Right ventricle myocardium inferior (tissue), 1 donor: ENCODE measurements at regions of chr2 and their contacts with region 1.

Region 1: DNA sequence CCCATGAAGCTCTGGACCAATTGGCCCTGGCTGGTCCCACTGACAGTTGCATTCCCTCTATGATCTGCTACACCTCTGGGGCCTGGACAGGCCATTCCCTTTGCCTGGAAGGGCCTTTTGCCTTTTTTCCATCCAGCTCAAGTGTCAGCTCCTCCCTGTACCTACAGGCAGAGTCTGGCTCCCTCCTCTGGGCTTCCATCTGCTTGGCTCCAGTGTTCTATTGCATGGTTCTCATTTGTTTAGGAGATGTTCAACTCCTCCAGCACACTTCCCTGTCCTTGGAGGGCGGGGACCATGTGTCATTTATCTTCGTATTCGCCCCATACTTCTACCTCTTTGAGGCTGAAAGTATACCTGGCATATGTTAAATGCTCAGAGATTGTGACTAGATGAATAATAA is 61.1 kb downstream of the PRKCE start:
- DNase-seq: no peak
- ATAC-seq: no peak

Region 2: DNA sequence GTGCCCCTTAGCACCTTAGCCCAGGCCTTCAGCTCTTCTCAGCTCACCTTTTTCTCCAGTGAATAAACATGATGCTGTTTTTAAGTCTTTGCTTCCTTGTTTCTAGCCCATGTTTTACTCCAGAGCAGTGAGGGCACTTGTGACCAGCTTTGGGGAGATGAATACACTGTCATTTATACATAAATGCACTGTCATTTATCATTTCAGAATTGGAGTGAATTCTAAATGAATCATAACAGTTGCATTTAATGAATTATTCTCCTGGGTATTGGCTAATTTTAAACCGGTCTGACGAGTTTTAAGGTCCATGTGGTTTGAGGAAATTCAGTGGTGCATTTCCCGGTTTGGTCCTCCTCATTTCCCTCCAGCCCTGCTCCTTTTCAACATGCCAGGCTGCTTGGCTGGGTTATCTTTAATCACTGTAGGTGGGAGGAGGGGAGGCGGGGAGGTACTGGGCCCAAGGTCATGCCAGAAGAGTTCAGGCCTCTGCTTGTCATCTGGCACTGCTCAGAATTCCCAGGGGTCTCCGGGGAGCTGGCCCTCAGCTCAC is 37.2 kb before region 1 on chr2:
- intact Hi-C with region 1: no loop called
- DNase-seq: no peak
- ATAC-seq: peak; percentile 74

Region 3: DNA sequence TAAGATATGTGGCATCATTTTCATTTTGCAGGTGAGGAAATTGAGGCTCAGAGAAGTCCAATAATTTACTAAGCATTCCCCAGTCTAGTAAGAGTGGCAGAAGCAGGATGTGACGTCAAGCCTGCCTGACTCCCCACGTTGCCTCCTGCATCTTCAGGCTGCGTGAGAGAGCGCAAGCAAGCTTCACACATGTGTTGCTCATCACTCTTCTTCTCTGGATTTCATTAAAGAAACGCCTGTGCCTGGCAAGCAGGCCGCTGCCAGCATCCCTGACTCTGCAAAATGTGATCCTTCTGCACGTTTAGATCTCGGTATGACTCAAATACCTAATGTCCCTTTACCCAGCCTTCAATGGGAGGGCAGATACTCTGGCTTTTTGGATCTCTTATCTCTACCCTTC is 35.7 kb after region 1 on chr2:
- intact Hi-C with region 1: loop called (anchors 5 kb)
- DNase-seq: no peak
- ATAC-seq: no peak

Region 4: GRCh38 chr2:45909663-45910191 is 197.2 kb after region 1 on chr2:
- intact Hi-C with region 1: no loop called
- DNase-seq: no peak
- ATAC-seq: no peak